Uterus (tissue), 4 donors: ENCODE measurements at regions of chr2 and their contacts with region 1.

Region 1: DNA sequence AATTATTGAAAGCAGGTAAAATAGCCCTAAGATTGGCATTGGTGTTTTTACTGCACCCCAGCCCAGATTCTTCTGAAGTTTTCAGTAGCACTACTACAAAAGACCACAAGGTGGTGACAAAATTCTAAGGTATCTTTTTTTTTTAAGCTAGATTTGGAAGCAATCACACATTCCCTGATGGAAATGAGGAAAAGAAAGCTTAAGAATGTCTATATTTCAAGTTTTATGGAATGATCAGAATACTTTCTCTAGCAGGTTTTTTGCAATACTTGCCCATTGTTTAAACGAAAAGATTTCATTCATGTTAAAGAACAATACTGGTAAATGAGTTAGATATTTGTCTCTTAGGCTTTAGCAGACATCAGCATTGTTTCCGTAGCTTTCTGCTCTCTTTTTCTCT is 32.1 kb upstream of the ZNF638 start:
- DNase-seq: no peak
- H3K4me3 ChIP-seq: no peak overlapping the region
- H3K27ac ChIP-seq: no peak overlapping the region
- H3K4me1 ChIP-seq: no peaks in the 10 kb centered on the region
- H3K27me3 ChIP-seq: no peaks in the 10 kb centered on the region
- CTCF ChIP-seq: peak; percentile 56 to 73 (median 64)
- POLR2A ChIP-seq: no peak

Region 2: DNA sequence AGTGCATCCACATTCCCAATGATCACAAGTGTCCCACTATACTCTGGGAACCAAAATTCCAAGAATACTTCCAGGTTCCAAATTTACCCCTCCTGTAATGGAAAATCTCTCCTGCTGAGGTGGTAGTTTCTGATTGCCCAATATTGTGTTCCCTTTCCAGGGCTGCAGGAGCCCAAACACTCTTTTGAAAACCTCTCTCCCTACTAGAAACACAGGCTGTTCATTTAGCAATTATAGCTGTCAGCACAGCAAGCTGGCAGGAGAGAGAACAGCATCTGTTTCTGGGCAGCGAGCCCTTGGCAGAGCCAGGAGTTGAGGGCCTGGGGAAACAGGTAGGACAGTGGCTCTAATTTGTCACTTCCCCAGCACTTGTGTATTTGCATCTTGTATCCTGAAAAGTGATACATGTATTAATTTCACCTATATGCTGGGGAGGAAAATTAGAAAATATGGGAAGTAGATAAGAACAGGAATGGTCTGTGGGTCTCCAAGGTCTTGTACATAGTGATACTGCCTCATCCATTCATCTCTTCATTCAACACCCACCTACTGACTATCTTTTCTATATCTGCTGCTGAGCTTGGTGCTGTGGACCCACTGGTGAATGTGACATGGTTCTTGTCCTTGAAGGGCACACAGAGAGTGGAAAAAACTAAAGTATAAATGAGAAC is 55.7 kb before region 1 on chr2:
- intact Hi-C with region 1: no loop called
- DNase-seq: no peak
- H3K4me3 ChIP-seq: no peak overlapping the region
- H3K27ac ChIP-seq: no peak overlapping the region
- H3K4me1 ChIP-seq: no peaks in the 10 kb centered on the region
- H3K27me3 ChIP-seq: no peaks in the 10 kb centered on the region
- CTCF ChIP-seq: no peak
- POLR2A ChIP-seq: no peak

Region 3: GRCh38 chr2:71389384-71390072 is 90.0 kb after region 1 on chr2:
- intact Hi-C with region 1: no loop called
- DNase-seq: no peak
- H3K4me3 ChIP-seq: no peak overlapping the region
- H3K27ac ChIP-seq: no peak overlapping the region
- H3K4me1 ChIP-seq: no peaks in the 10 kb centered on the region
- H3K27me3 ChIP-seq: no peaks in the 10 kb centered on the region
- CTCF ChIP-seq: no peak
- POLR2A ChIP-seq: no peak

Region 4: DNA sequence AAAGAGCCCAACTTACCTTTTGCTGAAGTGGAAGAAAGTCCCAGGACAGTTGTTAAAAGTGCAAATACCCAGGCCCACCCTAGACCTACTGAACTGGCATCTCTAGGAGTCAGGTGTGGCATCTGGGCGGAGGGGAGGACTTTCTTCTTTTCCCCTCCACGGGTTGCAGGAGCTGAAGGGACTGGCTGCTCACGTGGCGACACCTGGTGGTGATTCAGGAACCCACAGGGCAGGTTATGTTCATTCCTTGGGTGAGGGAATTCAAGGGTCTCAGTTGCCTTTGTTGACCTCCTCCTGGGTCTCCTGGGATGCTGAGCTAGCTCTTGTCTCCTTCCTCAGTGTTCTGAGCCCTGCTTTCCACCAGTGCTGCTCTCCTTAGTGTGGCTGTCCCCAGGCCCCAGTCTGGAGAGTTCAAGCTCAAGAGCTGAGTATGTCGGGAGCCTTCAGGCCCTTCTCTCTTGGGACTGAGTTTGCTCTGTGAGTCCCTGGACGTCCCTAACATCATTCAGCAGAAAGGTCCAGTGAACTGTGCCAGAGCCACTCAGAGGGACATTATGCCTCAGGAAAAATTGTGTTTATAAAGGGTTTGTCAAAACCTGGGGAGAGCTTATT is 210.8 kb after region 1 on chr2:
- intact Hi-C with region 1: loop called (anchors 5 kb)
- DNase-seq: peak; percentile 55 to 58
- H3K4me3 ChIP-seq: no peak overlapping the region
- H3K27ac ChIP-seq: no peak overlapping the region
- H3K4me1 ChIP-seq: no peaks in the 10 kb centered on the region
- H3K27me3 ChIP-seq: no peaks in the 10 kb centered on the region
- CTCF ChIP-seq: peak; percentile 77 to 83 (median 80)
- POLR2A ChIP-seq: no peak